ENCODE measurements at regions of chr16 and their contacts with region 1.

Region 1: GRCh38 chr16:57485916-57486857 is at the start of gene DOK4:
- DNase-seq: peak; percentile 63 to 88 (median 76)
- ATAC-seq: peak; percentile 96
- H3K4me3 ChIP-seq: peak within 1 kb of the TSS; percentile 76
- H3K4me3 Mint-ChIP-seq: peak within 1 kb of the TSS; percentile 89
- H3K27ac ChIP-seq: no peak within 1 kb of the TSS
- H3K27ac Mint-ChIP-seq: peak within 1 kb of the TSS; percentile 69
- H3K4me1 ChIP-seq: peaks cover 22% of the 10 kb centered on the region
- H3K4me1 Mint-ChIP-seq: peaks cover 34% of the 10 kb centered on the region
- H3K27me3 ChIP-seq: no peaks in the 10 kb centered on the region
- H3K27me3 Mint-ChIP-seq: no peaks in the 10 kb centered on the region
- CTCF ChIP-seq: no peak
- total RNA-seq, gene DOK4: 2.4 to 2.9 TPM

Region 2: GRCh38 chr16:57535680-57536305 is 49.6 kb after region 1 on chr16:
- CTCF ChIA-PET with region 1: interaction called, 4 read pairs
- POLR2A ChIA-PET with region 1: interaction called, 49 read pairs
- intact Hi-C with region 1: loop called (anchors 1 kb)
- DNase-seq: peak; percentile 87 to 98 (median 91)
- ATAC-seq: peak; percentile 85
- H3K4me3 ChIP-seq: peak overlapping the region; percentile 59
- H3K4me3 Mint-ChIP-seq: peak overlapping the region; percentile 89
- H3K27ac ChIP-seq: peak overlapping the region; percentile 94
- H3K27ac Mint-ChIP-seq: peak overlapping the region; percentile 96
- H3K4me1 ChIP-seq: peaks cover 79% of the 10 kb centered on the region
- H3K4me1 Mint-ChIP-seq: peaks cover 78% of the 10 kb centered on the region
- H3K27me3 ChIP-seq: no peaks in the 10 kb centered on the region
- H3K27me3 Mint-ChIP-seq: no peaks in the 10 kb centered on the region
- CTCF ChIP-seq: no peak